ENCODE measurements at regions of chr4 and their contacts with region 1.

Region 1: GRCh38 chr4:61555789-61556188 is 355.7 kb downstream of the ADGRL3 start:
- DNase-seq: peak; percentile 85 to 91
- H3K4me3 ChIP-seq: no peak overlapping the region
- H3K4me3 Mint-ChIP-seq: peak overlapping the region; percentile 61
- H3K27ac Mint-ChIP-seq: peak overlapping the region; percentile 98
- H3K4me1 ChIP-seq: peaks cover 57% of the 10 kb centered on the region
- H3K4me1 Mint-ChIP-seq: peaks cover 41% of the 10 kb centered on the region
- H3K27me3 ChIP-seq: no peaks in the 10 kb centered on the region
- H3K27me3 Mint-ChIP-seq: no peaks in the 10 kb centered on the region
- CTCF ChIP-seq: no peak

Region 2: GRCh38 chr4:60847614-60848013 is 708.2 kb before region 1 on chr4:
- CTCF ChIA-PET with region 1: no interaction called
- POLR2A ChIA-PET with region 1: no interaction called
- intact Hi-C with region 1: loop called (anchors 5 kb)
- DNase-seq: peak; percentile 62 to 63
- H3K4me3 ChIP-seq: no peak overlapping the region
- H3K4me3 Mint-ChIP-seq: peak overlapping the region; percentile 30
- H3K27ac Mint-ChIP-seq: peak overlapping the region; percentile 86
- H3K4me1 ChIP-seq: peaks cover 20% of the 10 kb centered on the region
- H3K4me1 Mint-ChIP-seq: peaks cover 19% of the 10 kb centered on the region
- H3K27me3 ChIP-seq: no peaks in the 10 kb centered on the region
- H3K27me3 Mint-ChIP-seq: no peaks in the 10 kb centered on the region
- CTCF ChIP-seq: no peak

Region 3: DNA sequence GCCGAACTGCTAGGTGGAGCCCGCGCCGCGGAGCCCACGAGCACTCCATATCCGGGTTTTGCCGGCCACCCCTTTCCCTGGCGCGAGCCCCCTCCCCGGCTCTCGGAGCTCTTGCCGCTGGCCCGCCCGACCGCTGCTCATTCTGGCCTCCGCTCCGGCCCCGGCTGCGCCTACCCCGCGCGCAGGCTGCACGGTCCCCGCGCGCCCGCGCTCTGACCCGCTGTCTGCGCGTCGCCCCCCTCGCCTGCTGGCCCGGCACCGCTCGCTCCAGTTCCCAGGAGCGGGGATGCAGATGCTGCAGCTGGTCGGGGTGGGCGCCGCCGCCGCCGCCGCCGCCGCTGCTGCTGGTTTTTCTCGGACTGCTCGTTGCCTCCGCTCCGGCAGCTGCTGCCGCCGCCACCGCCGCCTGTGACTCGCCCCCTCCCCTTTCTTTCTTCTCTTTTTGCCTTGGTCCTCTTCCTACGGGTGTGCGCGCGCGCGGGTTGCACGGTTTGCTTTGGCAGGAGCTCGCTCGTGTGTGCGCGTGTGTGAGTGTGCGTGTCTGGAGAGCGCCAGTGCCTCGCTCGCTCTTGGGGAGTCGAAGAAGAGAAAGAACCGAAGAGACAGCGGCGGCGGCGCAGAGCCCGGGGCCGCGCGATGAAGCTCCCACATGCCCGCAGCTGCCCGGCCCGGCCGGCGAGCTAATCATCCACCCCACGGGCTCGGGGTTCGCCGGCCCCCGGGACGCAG is 355.4 kb before region 1 on chr4 and contains the start of gene ADGRL3:
- CTCF ChIA-PET with region 1: no interaction called
- POLR2A ChIA-PET with region 1: interaction called, 3 read pairs
- intact Hi-C with region 1: loop called (anchors 10 kb)
- DNase-seq: no peak
- H3K4me3 ChIP-seq: no peak within 1 kb of the TSS
- H3K4me3 Mint-ChIP-seq: no peak within 1 kb of the TSS
- H3K27ac Mint-ChIP-seq: peak within 1 kb of the TSS; percentile 14
- H3K4me1 ChIP-seq: peaks cover 21% of the 10 kb centered on the region
- H3K4me1 Mint-ChIP-seq: peaks cover 8% of the 10 kb centered on the region
- H3K27me3 ChIP-seq: no peaks in the 10 kb centered on the region
- H3K27me3 Mint-ChIP-seq: no peaks in the 10 kb centered on the region
- CTCF ChIP-seq: no peak
- total RNA-seq, gene ADGRL3: 1.5 and 1.9 TPM in 2 replicates

Region 4: GRCh38 chr4:61443813-61444510 is 111.8 kb before region 1 on chr4:
- CTCF ChIA-PET with region 1: no interaction called
- POLR2A ChIA-PET with region 1: no interaction called
- intact Hi-C with region 1: loop called (anchors 5 kb)
- DNase-seq: no peak
- H3K4me3 ChIP-seq: no peak overlapping the region
- H3K4me3 Mint-ChIP-seq: peak overlapping the region; percentile 22
- H3K27ac Mint-ChIP-seq: peak overlapping the region; percentile 83
- H3K4me1 ChIP-seq: peaks cover 29% of the 10 kb centered on the region
- H3K4me1 Mint-ChIP-seq: peaks cover 23% of the 10 kb centered on the region
- H3K27me3 ChIP-seq: no peaks in the 10 kb centered on the region
- H3K27me3 Mint-ChIP-seq: no peaks in the 10 kb centered on the region
- CTCF ChIP-seq: no peak

Region 5: GRCh38 chr4:61540944-61541343 is 14.8 kb before region 1 on chr4:
- CTCF ChIA-PET with region 1: no interaction called
- POLR2A ChIA-PET with region 1: interaction called, 14 read pairs
- intact Hi-C with region 1: loop called (anchors 1 kb)
- DNase-seq: peak; percentile 87 to 90
- H3K4me3 ChIP-seq: no peak overlapping the region
- H3K4me3 Mint-ChIP-seq: peak overlapping the region; percentile 64
- H3K27ac Mint-ChIP-seq: peak overlapping the region; percentile 89
- H3K4me1 ChIP-seq: peaks cover 20% of the 10 kb centered on the region
- H3K4me1 Mint-ChIP-seq: peaks cover 25% of the 10 kb centered on the region
- H3K27me3 ChIP-seq: no peaks in the 10 kb centered on the region
- H3K27me3 Mint-ChIP-seq: no peaks in the 10 kb centered on the region
- CTCF ChIP-seq: peak in 1 of 2 experiments; percentile 19

Measured in Caco-2 (cell line).